Activated CD4-positive, alpha-beta T cell treated with anti-CD3 and anti-CD28 coated beads for 36 hours (primary cell): ENCODE measurements at regions of chr7 and their contacts with region 1.

Region 1: DNA sequence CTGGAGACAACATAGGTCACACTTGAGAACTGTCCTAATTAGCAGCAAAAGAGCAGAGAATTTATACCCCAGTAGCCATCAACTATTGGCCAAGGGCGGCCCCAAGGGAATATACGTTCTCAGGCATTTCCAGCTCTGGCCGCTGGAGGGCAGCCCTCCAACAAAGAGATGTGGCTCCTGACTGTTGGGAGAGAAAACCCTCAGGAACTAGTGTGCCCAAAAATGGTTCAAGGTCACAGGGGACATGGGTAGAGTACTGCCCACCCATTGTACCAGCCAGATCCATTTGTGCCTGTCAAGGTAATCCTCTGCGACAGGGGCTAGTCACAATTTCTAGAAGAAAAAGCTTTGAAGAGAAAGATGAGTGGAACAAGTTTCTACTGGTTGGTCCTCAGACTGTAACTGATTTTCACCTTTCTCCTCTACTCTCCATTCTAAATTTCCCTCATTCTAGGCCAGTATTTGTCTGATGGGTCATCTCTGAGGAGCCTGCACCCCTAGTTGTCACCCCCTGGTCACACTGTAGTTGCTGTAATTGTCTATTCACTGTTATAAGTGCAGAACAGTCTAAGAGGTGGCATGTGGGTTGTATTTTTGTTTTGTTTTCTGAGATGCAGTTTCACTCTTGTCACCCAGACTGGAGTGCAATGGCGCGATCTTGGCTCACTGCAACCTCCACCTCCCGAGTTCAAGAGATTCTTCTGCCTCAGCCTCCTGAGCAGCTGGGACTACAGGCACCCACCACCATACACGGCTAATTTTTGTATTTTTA is 14.7 kb upstream of the C7orf33 start:
- DNase-seq: peak; percentile 82
- ATAC-seq: peak; percentile 86
- H3K4me3 Mint-ChIP-seq: no peak overlapping the region
- H3K27ac Mint-ChIP-seq: no peak overlapping the region
- H3K4me1 Mint-ChIP-seq: peaks cover 13% of the 10 kb centered on the region
- H3K27me3 Mint-ChIP-seq: peaks cover 7% of the 10 kb centered on the region

Region 2: DNA sequence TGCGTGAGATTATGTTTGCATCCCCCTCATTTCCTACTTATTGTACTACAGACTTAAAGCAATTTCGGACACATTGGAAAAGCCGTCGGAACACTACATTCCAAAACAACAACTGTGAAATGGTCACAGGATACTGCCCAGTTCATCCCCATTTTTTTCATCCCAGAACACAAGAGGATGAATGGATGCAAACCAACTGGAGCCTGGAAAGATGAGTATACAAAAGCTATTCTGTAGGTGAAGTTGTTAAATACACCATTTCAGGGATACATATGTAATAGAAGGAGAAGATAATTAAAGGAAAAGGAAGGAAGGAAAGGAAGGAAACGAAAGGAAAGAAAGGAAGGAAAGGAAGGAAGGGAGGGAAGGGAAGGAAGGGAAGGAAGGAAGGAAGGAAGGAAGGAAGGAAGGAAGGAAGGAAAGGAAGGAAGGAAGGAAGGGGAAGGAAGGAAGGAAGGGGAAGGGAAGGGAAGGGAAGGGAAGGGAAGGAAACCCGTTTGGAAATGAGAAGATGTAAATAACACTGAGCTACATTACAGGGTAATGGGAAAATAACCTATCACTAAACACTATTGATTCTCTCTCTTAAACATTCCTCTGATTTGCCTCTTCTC is 33.8 kb before region 1 on chr7:
- CTCF ChIA-PET with region 1: interaction called, 10 read pairs
- POLR2A ChIA-PET with region 1: no interaction called
- intact Hi-C with region 1: no loop called
- DNase-seq: no peak
- ATAC-seq: no peak
- H3K4me3 Mint-ChIP-seq: no peak overlapping the region
- H3K27ac Mint-ChIP-seq: no peak overlapping the region
- H3K4me1 Mint-ChIP-seq: no peaks in the 10 kb centered on the region
- H3K27me3 Mint-ChIP-seq: peaks cover 4% of the 10 kb centered on the region

Region 3: GRCh38 chr7:148563583-148564274 is 12.1 kb before region 1 on chr7:
- CTCF ChIA-PET with region 1: interaction called, 28 read pairs
- POLR2A ChIA-PET with region 1: interaction called, 6 read pairs
- intact Hi-C with region 1: no loop called
- DNase-seq: no peak
- ATAC-seq: peak; percentile 57
- H3K4me3 Mint-ChIP-seq: peak overlapping the region; percentile 40
- H3K27ac Mint-ChIP-seq: peak overlapping the region; percentile 81
- H3K4me1 Mint-ChIP-seq: peaks cover 17% of the 10 kb centered on the region
- H3K27me3 Mint-ChIP-seq: peaks cover 8% of the 10 kb centered on the region

Region 4: DNA sequence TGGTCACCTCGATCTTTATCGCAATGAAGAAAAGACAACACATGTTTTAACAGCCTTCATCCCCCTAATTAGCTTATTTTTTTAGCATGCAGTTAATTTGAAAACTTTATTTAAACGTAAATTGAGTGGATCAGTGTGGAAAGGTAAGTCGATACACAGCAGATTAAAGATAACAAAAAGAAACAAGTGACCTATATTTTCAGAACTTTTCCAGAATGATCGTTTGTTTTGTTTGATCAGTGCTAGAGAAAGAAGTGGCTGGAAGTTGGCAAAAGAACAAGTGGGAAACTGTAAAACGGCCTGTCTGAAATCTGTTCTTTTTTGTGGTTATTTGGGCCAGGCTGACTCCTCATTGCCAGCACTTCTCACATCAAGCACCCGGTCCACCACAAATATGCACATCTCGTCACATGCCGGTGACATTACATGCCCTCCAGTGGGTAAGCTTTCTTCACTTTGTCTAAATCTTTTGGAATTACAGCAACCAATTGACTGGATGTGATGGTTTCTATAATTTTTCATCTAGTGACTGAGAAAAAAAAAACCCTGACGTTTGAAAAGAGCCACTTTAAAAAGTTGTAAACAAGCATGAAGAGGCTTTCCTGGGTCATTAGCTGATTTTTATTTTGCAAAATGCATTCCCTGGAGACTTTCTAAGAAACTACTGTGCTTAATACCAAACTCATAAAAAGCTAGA is 47.9 kb after region 1 on chr7:
- CTCF ChIA-PET with region 1: interaction called, 14 read pairs
- POLR2A ChIA-PET with region 1: no interaction called
- intact Hi-C with region 1: no loop called
- DNase-seq: no peak
- ATAC-seq: no peak
- H3K4me3 Mint-ChIP-seq: no peak overlapping the region
- H3K27ac Mint-ChIP-seq: no peak overlapping the region
- H3K4me1 Mint-ChIP-seq: peaks cover 59% of the 10 kb centered on the region
- H3K27me3 Mint-ChIP-seq: no peaks in the 10 kb centered on the region

Region 5: GRCh38 chr7:148773334-148773733 is 197.5 kb after region 1 on chr7:
- CTCF ChIA-PET with region 1: interaction called, 6 read pairs
- POLR2A ChIA-PET with region 1: no interaction called
- intact Hi-C with region 1: loop called in 1 of 2 experiments (anchors 5 kb)
- DNase-seq: peak; percentile 41
- ATAC-seq: peak; percentile 80
- H3K4me3 Mint-ChIP-seq: peak overlapping the region; percentile 16
- H3K27ac Mint-ChIP-seq: peak overlapping the region; percentile 77
- H3K4me1 Mint-ChIP-seq: peaks cover 25% of the 10 kb centered on the region
- H3K27me3 Mint-ChIP-seq: no peaks in the 10 kb centered on the region

Region 6: GRCh38 chr7:148905093-148905666 is 329.4 kb after region 1 on chr7:
- CTCF ChIA-PET with region 1: no interaction called
- POLR2A ChIA-PET with region 1: no interaction called
- intact Hi-C with region 1: no loop called
- DNase-seq: no peak
- ATAC-seq: no peak
- H3K4me3 Mint-ChIP-seq: no peak overlapping the region
- H3K27ac Mint-ChIP-seq: no peak overlapping the region
- H3K4me1 Mint-ChIP-seq: peaks cover 30% of the 10 kb centered on the region
- H3K27me3 Mint-ChIP-seq: no peaks in the 10 kb centered on the region